Kidney (tissue), 22 donors: ENCODE measurements at regions of chr11 and their contacts with region 1.

Region 1: GRCh38 chr11:57644748-57645688 is 4.7 kb downstream of the YPEL4 start:
- DNase-seq: peak; percentile 84 to 92 (median 91)
- H3K4me3 ChIP-seq: no peak overlapping the region
- H3K27ac ChIP-seq: no peak overlapping the region
- H3K4me1 ChIP-seq: peaks cover under 1 to 27% (median 5%) of the 10 kb centered on the region in 3 donors
- H3K27me3 ChIP-seq: peaks cover 1% of the 10 kb centered on the region
- CTCF ChIP-seq: peak; percentile 67

Region 2: GRCh38 chr11:57456960-57457642 is 187.9 kb before region 1 on chr11:
- intact Hi-C with region 1: loop called (anchors 5 kb)
- DNase-seq: peak; percentile 87 to 95 (median 91)
- H3K4me3 ChIP-seq: no peak overlapping the region
- H3K27ac ChIP-seq: no peak overlapping the region
- H3K4me1 ChIP-seq: peaks cover 0 to 19% (median 9%) of the 10 kb centered on the region in 3 donors
- H3K27me3 ChIP-seq: peaks cover 22% of the 10 kb centered on the region
- CTCF ChIP-seq: peak; percentile 100

Region 3: DNA sequence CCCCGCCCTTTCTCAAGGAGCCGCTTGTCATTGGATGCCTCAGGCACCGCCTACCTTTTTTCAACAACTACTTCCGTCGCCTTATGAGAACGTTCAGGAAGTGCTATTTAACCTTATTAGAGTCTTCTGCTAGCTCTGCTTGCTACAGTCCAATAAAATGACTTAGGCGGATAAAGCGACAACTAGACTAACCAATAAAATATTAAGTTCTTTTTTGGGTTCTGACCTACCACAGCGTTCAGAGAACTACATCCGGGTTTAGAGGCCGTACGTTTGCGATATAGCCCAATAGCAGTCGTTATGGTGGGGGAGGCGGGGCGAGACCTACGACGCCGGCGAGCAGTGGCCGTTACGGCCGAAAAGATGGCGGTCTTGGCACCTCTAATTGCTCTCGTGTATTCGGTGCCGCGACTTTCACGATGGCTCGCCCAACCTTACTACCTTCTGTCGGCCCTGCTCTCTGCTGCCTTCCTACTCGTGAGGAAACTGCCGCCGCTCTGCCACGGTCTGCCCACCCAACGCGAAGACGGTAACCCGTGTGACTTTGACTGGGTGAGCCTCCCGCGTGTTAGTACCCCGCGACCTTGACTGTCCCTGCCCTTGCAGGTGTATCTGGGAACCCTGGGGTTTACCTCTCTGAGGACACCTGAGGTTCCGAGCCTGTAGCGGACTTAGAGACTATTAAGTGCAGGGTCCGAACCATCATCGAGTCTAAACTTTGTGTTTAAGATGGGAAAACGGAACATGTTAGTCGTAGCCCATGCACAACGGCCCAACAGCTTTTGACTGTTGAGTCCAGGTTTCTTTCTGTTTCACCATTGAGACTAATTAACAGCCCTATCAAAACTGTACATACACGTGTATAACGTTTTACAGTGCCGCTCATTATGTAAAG is 67.5 kb after region 1 on chr11 and contains the start of gene TMX2:
- intact Hi-C with region 1: no loop called
- DNase-seq: peak; percentile 95 to 99 (median 97)
- H3K4me3 ChIP-seq: peak within 1 kb of the TSS; percentile 83 to 100 (median 99)
- H3K27ac ChIP-seq: peak within 1 kb of the TSS; percentile 56 to 90
- H3K4me1 ChIP-seq: peaks cover 0 to 17% (median 4%) of the 10 kb centered on the region in 3 donors
- H3K27me3 ChIP-seq: no peaks in the 10 kb centered on the region
- CTCF ChIP-seq: no peak
- total RNA-seq, gene TMX2: 86.1 TPM